Activated CD4-positive, alpha-beta T cell treated with anti-CD3 and anti-CD28 coated beads, Interleukin-2, amount 10 ng/mL, durations not matched to agents 7 days and 5 days (primary cell): ENCODE measurements at regions of chr19 and their contacts with region 1.

Region 1: GRCh38 chr19:2236314-2237050 is at the starts of genes PLEKHJ1 and SF3A2:
- DNase-seq: peak; percentile 97
- H3K4me3 Mint-ChIP-seq: peak within 1 kb of the TSS; percentile 97
- H3K27ac Mint-ChIP-seq: peak within 1 kb of the TSS; percentile 99
- H3K4me1 Mint-ChIP-seq: peaks cover 56% of the 10 kb centered on the region
- H3K27me3 Mint-ChIP-seq: no peaks in the 10 kb centered on the region
- total RNA-seq, gene PLEKHJ1: 56.2 to 71.9 TPM
- total RNA-seq, gene SF3A2: 142 to 151 TPM

Region 2: DNA sequence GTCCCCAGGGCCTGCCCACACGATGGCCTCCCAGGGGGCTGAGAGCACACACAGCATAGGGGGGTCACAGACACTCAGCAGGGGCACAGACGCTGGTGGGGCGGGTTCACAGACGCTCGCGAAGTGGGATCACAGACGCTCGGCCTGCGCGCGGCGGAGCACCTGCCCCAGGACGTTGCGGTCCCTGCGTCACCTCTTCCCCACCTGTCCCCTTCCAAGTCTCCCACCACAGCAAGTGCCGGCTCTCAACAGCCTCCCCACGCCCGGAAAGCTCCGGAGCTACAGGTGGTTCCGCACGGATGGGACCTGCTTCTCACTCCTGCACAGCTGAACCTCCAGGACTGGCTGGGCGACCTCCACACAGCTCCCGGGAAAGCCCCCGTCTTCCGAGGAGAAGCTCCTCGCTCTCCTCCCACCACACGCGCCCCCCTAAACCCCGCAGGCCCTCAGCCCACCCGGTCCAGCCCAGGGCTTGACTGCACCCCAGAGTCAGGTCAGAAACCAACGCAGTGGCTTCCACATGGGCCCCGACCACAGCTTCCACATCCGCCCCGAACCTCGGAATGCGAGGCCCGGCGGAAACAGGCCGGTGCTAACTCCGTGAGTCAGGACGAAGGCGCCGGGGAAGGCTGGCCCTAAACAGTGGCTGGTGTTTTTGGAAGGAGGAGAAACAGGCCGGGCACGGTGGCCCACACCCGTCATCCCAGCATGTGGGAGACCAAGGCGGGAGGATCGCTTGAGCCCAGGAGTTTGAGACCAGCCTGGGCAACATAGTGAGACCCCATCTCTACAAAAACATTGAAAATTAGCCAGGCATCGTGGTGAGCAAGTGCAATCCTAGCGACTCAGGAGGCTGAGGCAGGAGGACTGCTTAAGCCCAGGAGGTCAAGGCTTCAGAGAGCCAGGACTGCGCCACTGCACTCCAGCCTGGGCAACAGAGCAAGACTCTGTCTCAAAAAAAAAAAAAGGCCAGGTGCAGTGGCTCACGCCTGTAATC is 237.5 kb before region 1 on chr19:
- CTCF ChIA-PET with region 1: no interaction called
- POLR2A ChIA-PET with region 1: no interaction called
- DNase-seq: no peak
- H3K4me3 Mint-ChIP-seq: no peak overlapping the region
- H3K27ac Mint-ChIP-seq: no peak overlapping the region
- H3K4me1 Mint-ChIP-seq: no peaks in the 10 kb centered on the region
- H3K27me3 Mint-ChIP-seq: no peaks in the 10 kb centered on the region

Region 3: GRCh38 chr19:2113439-2114211 is 122.9 kb before region 1 on chr19:
- CTCF ChIA-PET with region 1: no interaction called
- POLR2A ChIA-PET with region 1: no interaction called
- DNase-seq: no peak
- H3K4me3 Mint-ChIP-seq: no peak overlapping the region
- H3K27ac Mint-ChIP-seq: no peak overlapping the region
- H3K4me1 Mint-ChIP-seq: no peaks in the 10 kb centered on the region
- H3K27me3 Mint-ChIP-seq: no peaks in the 10 kb centered on the region

Region 4: DNA sequence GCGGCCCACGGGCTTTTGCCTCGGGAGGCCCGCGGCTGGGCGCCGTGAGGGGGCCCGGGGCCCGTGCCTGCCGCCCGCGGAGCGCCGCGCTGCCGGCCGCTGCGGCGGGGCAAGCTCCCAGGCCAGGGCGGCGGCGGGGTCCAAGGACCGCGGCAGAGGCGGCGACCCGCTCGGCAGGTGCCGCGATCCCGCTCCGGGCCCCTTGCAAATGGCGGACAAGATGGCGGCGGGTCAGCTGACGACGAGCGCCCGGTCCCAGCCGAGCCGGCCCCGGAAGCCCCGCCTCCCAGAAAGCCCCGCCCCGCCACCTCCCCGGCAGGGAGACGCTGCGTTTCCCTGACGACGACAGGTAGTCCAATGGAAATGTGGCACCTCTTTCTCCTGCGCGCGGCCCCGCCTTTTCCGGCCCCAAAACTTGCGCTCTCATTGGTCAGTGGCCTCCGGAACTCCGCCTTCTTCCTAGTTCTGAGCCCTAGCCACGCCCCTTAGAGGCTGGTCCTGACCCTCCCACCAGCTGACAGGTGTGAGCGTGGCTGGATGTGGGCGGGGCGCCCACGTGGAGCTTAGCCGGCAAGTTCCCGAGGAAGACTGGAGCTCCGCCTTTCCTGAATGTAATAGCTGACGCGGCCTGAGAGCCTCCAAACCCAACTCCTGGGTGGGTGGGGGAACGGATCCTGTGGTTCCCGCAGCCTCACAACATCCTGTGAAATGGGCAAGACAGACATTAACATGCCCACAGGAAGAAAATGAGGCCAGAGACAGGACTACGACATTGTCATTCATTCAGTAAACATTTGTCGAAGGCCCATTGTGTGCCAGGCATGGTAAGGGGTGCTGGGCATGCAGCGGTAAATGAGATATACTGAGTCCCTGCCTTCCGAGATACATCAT is 84.9 kb before region 1 on chr19 and contains the start of gene AP3D1:
- CTCF ChIA-PET with region 1: interaction called, 14 read pairs
- POLR2A ChIA-PET with region 1: interaction called, 3 read pairs
- DNase-seq: peak; percentile 100
- H3K4me3 Mint-ChIP-seq: peak within 1 kb of the TSS; percentile 78
- H3K27ac Mint-ChIP-seq: peak within 1 kb of the TSS; percentile 86
- H3K4me1 Mint-ChIP-seq: peaks cover 47% of the 10 kb centered on the region
- H3K27me3 Mint-ChIP-seq: no peaks in the 10 kb centered on the region
- total RNA-seq, gene AP3D1: 95.7 to 95.8 TPM

Region 5: GRCh38 chr19:2261438-2262172 is 25.1 kb after region 1 on chr19:
- CTCF ChIA-PET with region 1: interaction called, 34 read pairs
- POLR2A ChIA-PET with region 1: no interaction called
- DNase-seq: peak; percentile 61
- H3K4me3 Mint-ChIP-seq: no peak overlapping the region
- H3K27ac Mint-ChIP-seq: peak overlapping the region; percentile 71
- H3K4me1 Mint-ChIP-seq: peaks cover 39% of the 10 kb centered on the region
- H3K27me3 Mint-ChIP-seq: no peaks in the 10 kb centered on the region

Region 6: GRCh38 chr19:2315818-2316353 is 79.4 kb after region 1 on chr19:
- CTCF ChIA-PET with region 1: no interaction called
- POLR2A ChIA-PET with region 1: no interaction called
- DNase-seq: peak; percentile 28
- H3K4me3 Mint-ChIP-seq: no peak overlapping the region
- H3K27ac Mint-ChIP-seq: no peak overlapping the region
- H3K4me1 Mint-ChIP-seq: peaks cover 4% of the 10 kb centered on the region
- H3K27me3 Mint-ChIP-seq: peaks cover 25% of the 10 kb centered on the region